ENCODE measurements at regions of chr21 and their contacts with region 1.

Region 1: DNA sequence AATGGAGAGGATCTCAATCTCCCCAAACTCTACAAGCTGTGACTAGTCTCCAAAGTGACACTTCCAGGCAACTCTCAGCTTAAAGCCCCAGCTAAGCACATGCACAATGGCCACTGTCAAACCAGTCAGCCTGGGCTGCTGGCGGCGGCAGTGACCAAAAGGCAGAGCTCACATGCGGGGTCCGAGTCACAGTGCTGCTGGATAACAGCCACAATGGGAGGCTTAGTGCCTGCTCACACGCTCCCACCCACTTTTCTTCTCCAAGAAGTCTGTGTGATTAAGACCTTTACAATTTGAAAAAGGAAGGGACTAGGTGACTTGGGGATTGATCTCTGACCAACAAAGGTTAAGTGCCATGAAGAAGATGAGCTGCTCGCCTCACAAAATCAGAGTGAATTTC is 16.8 kb downstream of the RIPK4 start:
- DNase-seq: peak; percentile 50
- ATAC-seq: no peak
- H3K4me3 ChIP-seq: no peak overlapping the region
- H3K27ac ChIP-seq: no peak overlapping the region
- H3K4me1 ChIP-seq: peaks cover 48% of the 10 kb centered on the region
- H3K27me3 ChIP-seq: no peaks in the 10 kb centered on the region
- CTCF ChIP-seq: no peak

Region 2: GRCh38 chr21:40481764-40482163 is 1268.3 kb before region 1 on chr21:
- CTCF ChIA-PET with region 1: no interaction called
- POLR2A ChIA-PET with region 1: no interaction called
- intact Hi-C with region 1: no loop called
- DNase-seq: no peak
- ATAC-seq: no peak
- H3K4me3 ChIP-seq: no peak overlapping the region
- H3K27ac ChIP-seq: no peak overlapping the region
- H3K4me1 ChIP-seq: no peaks in the 10 kb centered on the region
- H3K27me3 ChIP-seq: no peaks in the 10 kb centered on the region
- CTCF ChIP-seq: no peak

Region 3: DNA sequence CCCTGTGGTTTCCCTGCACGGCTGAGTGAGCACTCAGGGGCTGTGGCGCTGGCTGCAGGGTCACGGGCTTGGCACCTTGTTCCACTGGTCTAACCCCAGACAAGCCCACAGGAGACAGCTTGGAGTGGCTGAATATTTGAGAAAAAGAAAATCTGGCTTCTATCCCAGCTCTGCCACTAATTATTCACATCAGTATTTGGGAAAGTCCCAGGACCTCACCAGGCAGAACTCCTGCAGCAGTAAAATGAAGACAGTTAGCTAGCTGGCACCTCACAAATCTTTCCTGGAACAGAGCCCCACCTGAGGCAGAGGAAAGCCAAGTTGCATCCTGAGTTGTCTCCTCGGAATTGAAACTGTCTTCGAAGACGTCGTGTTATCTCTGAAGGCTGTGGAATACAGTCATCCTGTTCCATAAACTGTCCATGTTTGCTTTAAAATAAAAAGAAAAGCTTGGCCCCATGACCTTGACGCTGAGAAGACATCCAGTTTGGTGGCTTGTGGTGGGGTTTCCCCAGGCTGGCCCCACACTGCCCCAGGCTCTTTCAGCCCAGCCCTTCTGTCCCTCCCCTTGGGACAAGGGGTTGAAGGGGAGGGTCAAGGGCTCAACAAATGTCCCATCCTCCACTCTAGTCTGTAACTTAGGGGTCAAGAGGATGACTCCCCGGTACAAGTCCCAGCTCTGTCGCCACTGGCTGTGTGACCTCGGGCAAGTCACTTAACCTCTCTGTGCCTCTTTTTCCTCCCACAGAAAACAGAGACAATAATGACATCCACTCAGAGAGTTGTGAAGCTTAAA is 148.3 kb before region 1 on chr21:
- CTCF ChIA-PET with region 1: no interaction called
- POLR2A ChIA-PET with region 1: interaction called, 27 read pairs
- intact Hi-C with region 1: no loop called
- DNase-seq: peak; percentile 42
- ATAC-seq: peak; percentile 66
- H3K4me3 ChIP-seq: no peak overlapping the region
- H3K27ac ChIP-seq: no peak overlapping the region
- H3K4me1 ChIP-seq: peaks cover 11% of the 10 kb centered on the region; the same call in 1 of the 2 replicates
- H3K27me3 ChIP-seq: no peaks in the 10 kb centered on the region
- CTCF ChIP-seq: no peak

Region 4: GRCh38 chr21:42125571-42126544 is 375.8 kb after region 1 on chr21:
- CTCF ChIA-PET with region 1: no interaction called
- POLR2A ChIA-PET with region 1: no interaction called
- intact Hi-C with region 1: no loop called
- DNase-seq: peak; percentile 64
- ATAC-seq: peak; percentile 74
- H3K4me3 ChIP-seq: no peak overlapping the region
- H3K27ac ChIP-seq: no peak overlapping the region
- H3K4me1 ChIP-seq: peaks cover 20% of the 10 kb centered on the region
- H3K27me3 ChIP-seq: no peaks in the 10 kb centered on the region
- CTCF ChIP-seq: peak; percentile 59

Measured in PC-3 (cell line).